ENCODE measurements at regions of chrX and their contacts with region 1.

Region 1: GRCh38 chrX:3811331-3812311 is 98.2 kb upstream of the PRKX start:
- DNase-seq: no peak
- H3K4me3 ChIP-seq: no peak overlapping the region
- H3K27ac ChIP-seq: no peak overlapping the region
- H3K4me1 ChIP-seq: peaks cover 3% of the 10 kb centered on the region
- H3K27me3 ChIP-seq: no peaks in the 10 kb centered on the region
- CTCF ChIP-seq: peak in 1 of 2 donors; percentile 19
- POLR2A ChIP-seq: no peak

Region 2: GRCh38 chrX:2875798-2876399 is 935.7 kb before region 1 on chrX:
- CTCF ChIA-PET with region 1: interaction called, 22 read pairs
- POLR2A ChIA-PET with region 1: no interaction called
- dilution Hi-C with region 1: no loop called
- intact Hi-C with region 1: no loop called
- DNase-seq: no peak
- H3K4me3 ChIP-seq: no peak overlapping the region
- H3K27ac ChIP-seq: no peak overlapping the region
- H3K4me1 ChIP-seq: no peaks in the 10 kb centered on the region
- H3K27me3 ChIP-seq: no peaks in the 10 kb centered on the region
- CTCF ChIP-seq: peak; percentile 23 to 40
- POLR2A ChIP-seq: no peak

Region 3: GRCh38 chrX:3651276-3651675 is 160.3 kb before region 1 on chrX:
- CTCF ChIA-PET with region 1: interaction called, 22 read pairs
- POLR2A ChIA-PET with region 1: no interaction called
- dilution Hi-C with region 1: no loop called
- intact Hi-C with region 1: loop called (anchors 1 kb)
- DNase-seq: peak; percentile 46
- H3K4me3 ChIP-seq: no peak overlapping the region
- H3K27ac ChIP-seq: no peak overlapping the region
- H3K4me1 ChIP-seq: peaks cover 4% of the 10 kb centered on the region
- H3K27me3 ChIP-seq: no peaks in the 10 kb centered on the region
- CTCF ChIP-seq: peak in 1 of 2 donors; percentile 6
- POLR2A ChIP-seq: no peak

Region 4: GRCh38 chrX:3777416-3777815 is 34.2 kb before region 1 on chrX:
- CTCF ChIA-PET with region 1: no interaction called
- POLR2A ChIA-PET with region 1: no interaction called
- dilution Hi-C with region 1: no loop called
- intact Hi-C with region 1: no loop called
- DNase-seq: no peak
- H3K4me3 ChIP-seq: no peak overlapping the region
- H3K27ac ChIP-seq: no peak overlapping the region
- H3K4me1 ChIP-seq: no peaks in the 10 kb centered on the region
- H3K27me3 ChIP-seq: no peaks in the 10 kb centered on the region
- CTCF ChIP-seq: no peak
- POLR2A ChIP-seq: no peak